Dendritic cell treated with granulocyte-macrophage colony-stimulating factor and Interleukin-4, amounts not matched to agents 40 ng/mL and 50 ng/mL, for 4 days (primary cell): ENCODE measurements at regions of chr15 and their contacts with region 1.

Region 1: DNA sequence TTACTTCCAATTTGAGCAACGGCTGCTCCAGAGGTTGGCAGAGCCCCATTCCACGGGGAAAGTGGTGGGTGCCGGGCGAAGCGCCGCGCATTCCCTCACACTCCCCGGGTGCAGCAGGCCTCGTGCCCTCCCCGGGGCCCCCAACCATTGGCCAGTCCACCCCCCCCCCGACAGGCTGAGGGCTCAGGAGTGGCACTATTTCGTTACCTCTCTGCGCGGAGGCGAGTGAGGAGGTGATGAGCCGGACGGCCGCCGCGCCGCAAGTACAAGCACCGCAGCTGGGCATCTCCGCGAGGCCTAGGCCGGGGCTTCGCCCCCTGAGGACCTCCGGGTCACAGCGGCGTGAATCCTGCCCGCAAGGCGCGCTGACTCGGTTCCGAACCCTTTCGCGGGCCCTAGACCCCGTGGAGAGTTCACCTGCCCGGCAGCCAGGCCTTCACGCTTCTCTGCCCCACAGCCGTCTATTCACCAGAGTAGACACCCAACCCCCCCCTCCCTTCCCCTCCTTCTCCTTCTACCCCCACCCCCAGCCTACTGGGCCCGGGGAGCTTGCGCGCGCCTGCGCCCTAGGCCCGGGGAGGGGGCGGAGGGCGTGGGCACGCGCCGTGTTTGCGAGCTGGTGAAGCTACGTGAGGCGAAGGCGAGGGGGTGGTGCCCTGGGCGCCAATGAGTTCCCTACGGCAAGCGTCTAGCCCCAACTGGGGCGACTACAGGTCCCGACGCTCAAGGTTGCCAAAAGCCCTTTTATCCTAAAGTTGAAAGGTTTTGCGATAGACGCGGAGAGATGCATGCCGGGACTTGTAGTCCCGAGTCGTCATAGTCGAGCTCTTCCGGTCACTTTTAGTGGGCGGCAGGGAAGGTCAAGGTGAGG is at the start of gene CLPX:
- H3K4me3 Mint-ChIP-seq: peak within 1 kb of the TSS; percentile 92
- H3K27ac Mint-ChIP-seq: peak within 1 kb of the TSS; percentile 94
- H3K4me1 Mint-ChIP-seq: peaks cover 24% of the 10 kb centered on the region
- H3K27me3 Mint-ChIP-seq: no peaks in the 10 kb centered on the region

Region 2: DNA sequence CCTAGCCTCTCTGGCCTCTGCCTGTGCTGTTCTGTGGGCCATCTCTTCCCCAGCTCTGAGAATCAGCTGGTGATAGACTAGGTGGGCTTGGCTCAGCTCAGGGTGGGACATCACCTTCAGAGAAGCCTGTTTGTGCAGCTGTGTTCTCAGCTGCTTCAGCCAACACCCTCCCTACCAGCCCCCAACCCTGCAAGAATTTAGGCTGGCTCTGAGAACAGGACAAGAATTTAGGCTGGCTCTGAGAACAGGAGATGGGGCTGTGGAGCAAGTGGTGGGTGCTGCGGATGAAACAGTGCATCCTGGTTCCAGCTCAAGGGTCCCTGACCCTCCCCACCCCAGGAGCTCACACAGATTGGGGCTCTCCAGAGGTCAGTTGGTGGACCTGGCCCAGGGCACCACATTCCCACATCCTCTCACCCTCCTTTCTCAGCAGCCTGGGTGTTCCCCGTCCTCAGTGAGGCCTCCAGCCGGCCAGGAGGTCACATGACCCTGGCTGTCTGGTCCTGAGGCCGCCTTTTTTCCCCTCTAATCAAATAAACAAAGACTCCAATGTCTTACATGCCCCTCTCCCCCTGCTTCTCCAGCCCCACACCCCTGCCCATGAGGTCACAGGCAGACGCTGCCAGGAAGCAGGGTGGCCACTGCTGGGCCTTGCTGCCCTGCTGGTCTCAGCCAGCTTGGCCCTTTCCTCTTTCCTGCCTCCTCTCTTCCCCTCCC is 328.5 kb before region 1 on chr15:
- intact Hi-C with region 1: no loop called
- H3K4me3 Mint-ChIP-seq: peak overlapping the region; percentile 30
- H3K27ac Mint-ChIP-seq: peak overlapping the region; percentile 84
- H3K4me1 Mint-ChIP-seq: peaks cover 92% of the 10 kb centered on the region
- H3K27me3 Mint-ChIP-seq: no peaks in the 10 kb centered on the region

Region 3: GRCh38 chr15:65133548-65134200 is 51.4 kb before region 1 on chr15 and contains the start of gene PDCD7:
- intact Hi-C with region 1: loop called (anchors 2 kb)
- H3K4me3 Mint-ChIP-seq: peak within 1 kb of the TSS; percentile 90
- H3K27ac Mint-ChIP-seq: peak within 1 kb of the TSS; percentile 90
- H3K4me1 Mint-ChIP-seq: peaks cover 16% of the 10 kb centered on the region
- H3K27me3 Mint-ChIP-seq: peaks cover 1% of the 10 kb centered on the region